Endothelial cell of umbilical vein (primary cell): ENCODE measurements at regions of chr2 and their contacts with region 1.

Region 1: DNA sequence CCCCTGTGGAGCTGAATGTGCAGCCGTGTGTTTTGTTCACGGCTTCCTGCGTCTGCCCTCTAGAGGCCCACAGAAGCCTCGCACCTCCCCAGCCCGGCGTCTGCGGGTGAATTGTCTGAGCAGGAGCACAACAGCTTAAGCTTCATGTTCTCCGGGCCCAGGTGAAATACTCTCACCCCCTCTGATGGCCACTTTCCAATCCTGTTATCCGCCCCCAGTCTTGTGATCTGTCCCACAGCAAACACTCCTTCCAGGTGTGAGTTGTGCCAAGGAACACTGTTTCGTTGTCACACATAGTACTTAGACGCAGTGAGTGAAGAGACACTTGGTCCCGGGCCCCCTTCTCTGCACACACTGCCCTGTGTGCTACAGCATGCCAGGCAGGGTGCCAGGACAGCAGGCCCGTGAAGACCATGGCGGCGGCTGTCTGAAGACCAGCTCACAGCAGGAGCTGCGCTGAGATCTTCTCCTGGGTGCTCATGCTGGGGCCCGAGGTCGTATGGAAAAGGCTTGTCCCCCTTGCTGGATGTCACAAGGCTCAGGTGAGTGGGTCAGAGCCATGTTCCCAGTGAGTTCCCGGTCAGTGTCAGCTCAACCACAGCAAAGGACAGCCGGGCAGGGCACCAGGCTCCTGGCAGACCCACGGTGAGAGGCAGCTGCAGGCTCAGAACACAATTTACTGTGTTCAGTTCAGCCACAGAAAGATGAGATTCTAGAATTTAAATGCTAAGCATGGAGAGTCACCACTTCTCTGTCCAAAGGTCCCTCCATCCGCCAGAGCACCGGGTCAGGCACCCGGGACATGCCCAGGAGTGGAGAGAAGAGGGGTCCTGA is 6.8 kb upstream of the PXDN start:
- DNase-seq: peak; percentile 68
- H3K4me3 ChIP-seq: no peak overlapping the region
- H3K27ac ChIP-seq: no peak overlapping the region
- H3K4me1 ChIP-seq: peaks cover 3% of the 10 kb centered on the region
- H3K27me3 ChIP-seq: peaks cover 0 to 4% of the 10 kb centered on the region in 2 experiments
- CTCF ChIP-seq: peak; percentile 80 to 96
- POLR2A ChIP-seq: no peak

Region 2: GRCh38 chr2:1461507-1462390 is 289.4 kb before region 1 on chr2:
- CTCF ChIA-PET with region 1: no interaction called
- POLR2A ChIA-PET with region 1: no interaction called
- dilution Hi-C with region 1: no loop called
- intact Hi-C with region 1: no loop called
- DNase-seq: no peak
- H3K4me3 ChIP-seq: no peak overlapping the region
- H3K27ac ChIP-seq: no peak overlapping the region
- H3K4me1 ChIP-seq: no peaks in the 10 kb centered on the region
- H3K27me3 ChIP-seq: no peaks in the 10 kb centered on the region
- CTCF ChIP-seq: no peak
- POLR2A ChIP-seq: no peak

Region 3: DNA sequence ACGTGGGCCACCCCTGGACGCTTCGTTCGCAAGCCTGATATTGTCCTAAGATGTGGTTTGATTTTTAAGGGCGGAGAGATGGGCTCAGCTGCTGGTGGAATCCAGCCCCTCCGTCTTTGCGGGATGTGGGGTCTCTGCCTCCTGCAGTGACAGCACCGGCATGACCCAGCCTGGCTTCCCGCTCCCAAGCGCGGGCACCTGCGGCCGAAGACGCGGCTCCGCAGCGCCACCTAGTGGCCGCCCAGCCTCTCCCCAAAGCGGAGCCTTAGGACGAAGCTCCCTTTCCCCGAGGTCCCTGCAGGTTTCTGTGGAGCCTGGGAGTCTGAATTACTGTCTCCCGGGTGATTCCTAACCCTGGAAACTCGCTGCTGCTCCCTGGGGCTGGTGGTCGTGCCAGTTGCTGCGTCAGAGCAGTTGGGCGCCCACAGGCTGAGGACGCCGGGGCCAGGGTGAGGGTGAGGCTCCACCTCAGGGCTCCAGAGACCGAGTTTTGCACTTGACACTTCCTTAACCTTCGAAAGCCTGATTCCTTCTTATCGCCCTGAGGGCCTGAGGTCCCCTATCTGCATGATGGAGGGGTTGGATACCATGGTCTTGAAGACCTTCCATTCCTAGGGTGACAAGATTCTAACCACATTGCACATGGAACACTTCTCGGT is 200.4 kb before region 1 on chr2:
- CTCF ChIA-PET with region 1: interaction called, 31 read pairs
- POLR2A ChIA-PET with region 1: no interaction called
- dilution Hi-C with region 1: no loop called
- intact Hi-C with region 1: no loop called
- DNase-seq: peak; percentile 27
- H3K4me3 ChIP-seq: no peak overlapping the region
- H3K27ac ChIP-seq: no peak overlapping the region
- H3K4me1 ChIP-seq: no peaks in the 10 kb centered on the region
- H3K27me3 ChIP-seq: no peaks in the 10 kb centered on the region
- CTCF ChIP-seq: peak; percentile 93 to 99
- POLR2A ChIP-seq: no peak

Region 4: DNA sequence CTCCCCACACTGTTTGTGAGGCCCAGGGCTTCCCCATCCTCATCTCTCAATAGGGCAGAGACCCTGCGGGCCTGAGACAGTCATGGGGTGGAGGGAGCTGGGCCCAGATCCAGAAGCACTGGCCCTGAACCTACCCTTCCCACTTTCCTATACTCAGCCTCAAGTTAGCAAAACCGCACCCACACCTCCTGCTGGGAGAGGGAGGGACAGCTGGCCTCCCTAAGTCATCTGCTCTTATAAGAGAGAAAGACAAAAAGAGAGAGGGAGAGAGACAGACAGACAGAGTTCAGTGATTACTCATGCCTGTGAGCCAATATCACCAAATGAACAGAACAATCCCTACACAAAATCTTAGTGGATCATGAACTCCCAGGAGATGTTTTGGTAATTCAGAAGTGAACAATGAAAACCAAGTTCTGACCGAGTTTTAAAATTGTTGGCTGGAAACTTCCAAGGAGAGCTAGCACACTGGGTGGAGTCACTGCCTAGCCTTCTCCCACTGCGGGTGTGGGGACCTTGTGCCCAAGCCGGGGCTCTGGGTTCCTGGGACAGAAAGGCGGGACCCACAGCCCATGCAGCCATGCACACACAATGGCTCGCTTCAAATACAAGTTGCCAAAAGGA is 137.3 kb before region 1 on chr2:
- CTCF ChIA-PET with region 1: interaction called, 10 read pairs
- POLR2A ChIA-PET with region 1: no interaction called
- dilution Hi-C with region 1: no loop called
- intact Hi-C with region 1: no loop called
- DNase-seq: no peak
- H3K4me3 ChIP-seq: no peak overlapping the region
- H3K27ac ChIP-seq: no peak overlapping the region
- H3K4me1 ChIP-seq: no peaks in the 10 kb centered on the region
- H3K27me3 ChIP-seq: peaks cover 3 to 4% of the 10 kb centered on the region in 2 experiments
- CTCF ChIP-seq: no peak
- POLR2A ChIP-seq: no peak

Region 5: GRCh38 chr2:1653956-1654695 is 97.0 kb before region 1 on chr2:
- CTCF ChIA-PET with region 1: interaction called, 21 read pairs
- POLR2A ChIA-PET with region 1: no interaction called
- dilution Hi-C with region 1: no loop called
- intact Hi-C with region 1: no loop called
- DNase-seq: peak; percentile 40
- H3K4me3 ChIP-seq: no peak overlapping the region
- H3K27ac ChIP-seq: peak overlapping the region; percentile 70
- H3K4me1 ChIP-seq: peaks cover 5% of the 10 kb centered on the region
- H3K27me3 ChIP-seq: no peaks in the 10 kb centered on the region
- CTCF ChIP-seq: no peak
- POLR2A ChIP-seq: no peak

Region 6: DNA sequence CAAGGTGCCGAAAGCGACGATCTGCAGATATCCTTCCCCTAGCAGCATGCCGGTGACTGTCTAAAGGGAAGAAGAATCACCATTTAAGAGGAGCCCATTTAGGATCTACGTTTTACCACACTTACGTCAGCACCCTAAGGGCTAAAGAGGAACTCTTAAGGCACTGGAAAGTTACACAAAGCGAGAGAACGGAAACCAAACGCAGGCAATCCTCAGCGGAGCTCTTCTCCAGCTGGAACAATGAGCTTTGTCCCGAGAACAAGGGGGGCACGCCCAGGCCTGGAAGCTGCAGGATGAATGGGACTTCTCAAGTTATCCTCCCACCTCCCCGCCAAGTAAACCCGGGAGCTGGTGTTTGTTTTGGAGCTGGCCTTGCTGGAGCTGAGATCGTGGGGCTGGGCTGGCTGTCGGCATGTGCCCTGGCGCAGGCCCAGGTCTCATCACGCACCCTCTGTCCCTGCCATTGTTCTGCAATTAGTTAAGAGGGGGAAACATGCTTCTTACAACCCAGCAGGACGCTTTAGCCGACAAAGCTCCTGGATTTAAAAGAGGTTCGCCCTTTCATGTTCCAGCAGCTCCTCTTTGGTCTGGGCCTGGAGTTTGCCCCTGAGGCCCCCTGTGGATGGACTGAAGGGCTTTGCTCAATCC is 43.3 kb before region 1 on chr2:
- CTCF ChIA-PET with region 1: interaction called, 16 read pairs
- POLR2A ChIA-PET with region 1: no interaction called
- dilution Hi-C with region 1: no loop called
- intact Hi-C with region 1: no loop called
- DNase-seq: peak; percentile 92
- H3K4me3 ChIP-seq: no peak overlapping the region
- H3K27ac ChIP-seq: peak overlapping the region; percentile 71
- H3K4me1 ChIP-seq: peaks cover 18% of the 10 kb centered on the region
- H3K27me3 ChIP-seq: no peaks in the 10 kb centered on the region
- CTCF ChIP-seq: no peak
- POLR2A ChIP-seq: peak; percentile 20

Region 7: DNA sequence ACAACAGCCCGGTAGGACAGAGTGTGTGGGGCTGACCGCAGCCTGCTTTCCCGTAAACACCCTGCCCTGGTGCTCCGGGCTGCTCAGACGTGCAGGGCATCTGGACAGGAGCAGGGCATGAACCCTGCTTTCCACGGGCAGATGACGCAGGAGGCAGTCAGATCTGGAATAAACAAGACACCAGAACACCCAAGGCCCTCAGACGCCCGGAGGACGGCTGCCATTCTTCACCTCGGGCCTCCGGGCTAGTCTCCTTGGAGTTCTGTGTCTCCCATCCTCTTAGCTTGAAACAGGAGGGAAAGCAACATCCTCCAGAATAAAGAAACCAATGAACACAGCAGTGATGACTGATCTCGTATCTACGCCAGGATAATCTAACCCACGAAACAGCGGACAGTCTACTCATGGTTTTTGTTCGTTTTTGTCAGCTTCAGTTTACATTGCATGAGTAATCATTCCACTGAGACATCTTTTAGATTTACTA is 14.1 kb before region 1 on chr2:
- CTCF ChIA-PET with region 1: interaction called, 11 read pairs
- POLR2A ChIA-PET with region 1: no interaction called
- dilution Hi-C with region 1: no loop called
- intact Hi-C with region 1: no loop called
- DNase-seq: no peak
- H3K4me3 ChIP-seq: no peak overlapping the region
- H3K27ac ChIP-seq: no peak overlapping the region
- H3K4me1 ChIP-seq: peaks cover 12% of the 10 kb centered on the region
- H3K27me3 ChIP-seq: no peaks in the 10 kb centered on the region
- CTCF ChIP-seq: no peak
- POLR2A ChIP-seq: no peak

Region 8: DNA sequence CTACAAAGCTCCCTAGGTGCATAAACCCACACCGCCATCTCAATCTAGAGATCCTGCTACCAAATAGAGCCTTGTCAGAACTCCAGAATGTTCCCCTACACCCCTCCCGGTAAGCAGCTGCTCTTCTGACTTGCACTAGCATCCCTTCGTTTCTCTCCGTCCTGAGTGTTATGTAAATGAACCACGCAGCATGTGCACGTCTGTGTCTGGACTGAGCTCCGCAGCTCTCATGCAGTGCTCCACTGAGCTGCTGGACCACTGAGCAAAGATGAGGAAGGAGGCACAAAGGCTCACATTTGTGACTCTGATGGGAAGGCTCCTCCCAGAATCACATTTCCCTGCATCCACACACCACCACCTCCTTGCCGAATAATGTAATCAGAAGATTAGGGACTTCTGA is 376.3 kb after region 1 on chr2:
- CTCF ChIA-PET with region 1: no interaction called
- POLR2A ChIA-PET with region 1: no interaction called
- dilution Hi-C with region 1: no loop called
- intact Hi-C with region 1: no loop called
- DNase-seq: no peak
- H3K4me3 ChIP-seq: no peak overlapping the region
- H3K27ac ChIP-seq: no peak overlapping the region
- H3K4me1 ChIP-seq: no peaks in the 10 kb centered on the region
- H3K27me3 ChIP-seq: no peaks in the 10 kb centered on the region
- CTCF ChIP-seq: no peak
- POLR2A ChIP-seq: no peak